Breast epithelium (tissue), 4 donors: ENCODE measurements at regions of chr12 and their contacts with region 1.

Region 1: GRCh38 chr12:100767950-100768349 is 26.6 kb upstream of the ANO4 start:
- DNase-seq: no peak
- H3K4me3 ChIP-seq: no peak overlapping the region
- H3K27ac ChIP-seq: no peak overlapping the region
- H3K4me1 ChIP-seq: no peaks in the 10 kb centered on the region
- H3K27me3 ChIP-seq: no peaks in the 10 kb centered on the region
- CTCF ChIP-seq: no peak
- POLR2A ChIP-seq: no peak

Region 2: GRCh38 chr12:100753837-100754236 is 14.1 kb before region 1 on chr12:
- intact Hi-C with region 1: loop called (anchors 2 kb)
- DNase-seq: no peak
- H3K4me3 ChIP-seq: no peak overlapping the region
- H3K27ac ChIP-seq: no peak overlapping the region
- H3K4me1 ChIP-seq: no peaks in the 10 kb centered on the region
- H3K27me3 ChIP-seq: no peaks in the 10 kb centered on the region
- CTCF ChIP-seq: no peak
- POLR2A ChIP-seq: no peak

Region 3: GRCh38 chr12:101459642-101460346 is 691.8 kb after region 1 on chr12:
- intact Hi-C with region 1: no loop called
- DNase-seq: no peak
- H3K4me3 ChIP-seq: no peak overlapping the region
- H3K27ac ChIP-seq: no peak overlapping the region
- H3K4me1 ChIP-seq: no peaks in the 10 kb centered on the region
- H3K27me3 ChIP-seq: no peaks in the 10 kb centered on the region
- CTCF ChIP-seq: no peak
- POLR2A ChIP-seq: no peak